ENCODE measurements at regions of chr3 and their contacts with region 1.

Region 1: DNA sequence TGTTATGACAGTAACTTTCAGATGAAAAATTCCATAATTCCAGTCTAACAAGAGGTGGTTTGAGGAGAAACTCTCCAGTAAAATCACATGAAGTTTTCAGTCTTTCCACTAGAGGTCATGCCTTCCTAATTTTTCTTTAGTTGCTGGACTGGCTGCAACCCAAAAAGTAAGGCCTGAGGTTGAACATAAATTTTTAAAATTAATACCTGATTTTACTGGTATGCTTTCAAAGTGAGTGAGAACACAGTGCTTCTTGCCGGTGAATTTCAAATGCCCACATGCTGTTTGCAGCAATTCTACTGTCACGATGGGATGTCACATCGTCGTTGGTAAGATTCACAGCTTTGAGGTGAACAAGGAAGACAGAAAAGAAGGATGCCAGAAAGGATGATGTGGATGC is 89.0 kb upstream of the FGF12 start:
- DNase-seq: peak; percentile 33
- ATAC-seq: no peak
- H3K4me3 ChIP-seq: no peak overlapping the region
- H3K27ac ChIP-seq: no peak overlapping the region
- H3K4me1 ChIP-seq: peaks cover 8 to 22% of the 10 kb centered on the region in 2 experiments; a peak in 3 of 4 replicates
- H3K27me3 ChIP-seq: no peaks in the 10 kb centered on the region
- CTCF ChIP-seq: peak; percentile 58 to 73 (median 70)
- POLR2A ChIP-seq: no peak
- RAD21 ChIP-seq: peak; percentile 91

Region 2: GRCh38 chr3:192802957-192803899 is 13.1 kb before region 1 on chr3:
- CTCF ChIA-PET with region 1: interaction called, 10 read pairs
- POLR2A ChIA-PET with region 1: no interaction called
- RAD21 ChIA-PET with region 1: no interaction called
- intact Hi-C with region 1: no loop called
- DNase-seq: peak; percentile 38
- ATAC-seq: peak; percentile 82
- H3K4me3 ChIP-seq: no peak overlapping the region
- H3K27ac ChIP-seq: no peak overlapping the region
- H3K4me1 ChIP-seq: no peaks in the 10 kb centered on the region
- H3K27me3 ChIP-seq: no peaks in the 10 kb centered on the region
- CTCF ChIP-seq: peak; percentile 52 to 68 (median 56)
- POLR2A ChIP-seq: no peak
- RAD21 ChIP-seq: peak; percentile 54

Region 3: DNA sequence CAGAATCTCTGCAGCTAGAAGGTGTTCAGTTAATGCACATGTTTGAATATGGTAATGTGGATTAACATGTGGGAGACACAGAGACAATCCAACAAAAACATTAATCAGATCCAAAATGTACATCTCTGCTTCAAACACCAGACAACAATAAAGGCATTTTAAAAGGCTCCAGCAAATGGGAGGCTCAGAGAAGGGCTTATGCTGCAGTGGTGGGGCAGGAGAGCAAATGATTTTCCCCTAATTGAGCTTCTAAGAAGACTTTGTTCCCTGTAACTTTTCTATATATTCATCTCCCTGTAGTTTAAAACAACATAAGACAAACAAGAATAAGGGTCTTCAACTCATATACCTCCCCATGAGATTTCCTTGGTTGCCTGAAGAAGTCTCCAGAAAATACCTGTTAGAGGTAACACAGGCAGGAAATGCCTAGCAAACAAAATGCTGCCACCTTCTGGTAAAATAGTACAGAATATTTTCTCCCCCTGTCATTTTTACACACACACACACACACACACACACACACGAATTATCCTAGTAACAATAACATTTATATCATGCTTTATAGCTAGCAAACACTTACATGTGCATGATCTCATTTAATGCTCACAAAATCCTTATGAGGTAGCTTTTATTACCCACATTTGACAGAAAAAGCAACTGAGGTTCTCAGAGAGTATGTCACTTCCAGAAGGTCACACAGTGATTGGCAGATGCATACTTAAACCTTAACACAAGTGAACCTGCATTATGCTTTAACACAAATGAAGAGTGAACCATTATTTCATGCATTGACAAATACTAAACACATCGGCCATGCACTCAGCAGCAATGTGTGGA is 224.7 kb after region 1 on chr3:
- CTCF ChIA-PET with region 1: interaction called, 57 read pairs
- POLR2A ChIA-PET with region 1: interaction called, 3 read pairs
- RAD21 ChIA-PET with region 1: interaction called, 6 to 10 read pairs
- intact Hi-C with region 1: loop called (anchors 1 kb)
- DNase-seq: peak; percentile 50
- ATAC-seq: peak; percentile 83
- H3K4me3 ChIP-seq: no peak overlapping the region
- H3K27ac ChIP-seq: no peak overlapping the region
- H3K4me1 ChIP-seq: no peaks in the 10 kb centered on the region
- H3K27me3 ChIP-seq: no peaks in the 10 kb centered on the region
- CTCF ChIP-seq: peak; percentile 38 to 71 (median 65); a peak in 5 of 6 replicates
- POLR2A ChIP-seq: no peak
- RAD21 ChIP-seq: peak; percentile 85

Region 4: GRCh38 chr3:193229851-193230425 is 413.6 kb after region 1 on chr3:
- CTCF ChIA-PET with region 1: interaction called, 3 read pairs
- POLR2A ChIA-PET with region 1: no interaction called
- RAD21 ChIA-PET with region 1: no interaction called
- intact Hi-C with region 1: loop called (anchors 10 kb)
- DNase-seq: no peak
- ATAC-seq: no peak
- H3K4me3 ChIP-seq: no peak overlapping the region
- H3K27ac ChIP-seq: no peak overlapping the region
- H3K4me1 ChIP-seq: no peaks in the 10 kb centered on the region
- H3K27me3 ChIP-seq: peaks cover 33% of the 10 kb centered on the region; the same call in 1 of the 2 replicates
- CTCF ChIP-seq: no peak
- POLR2A ChIP-seq: no peak
- RAD21 ChIP-seq: no peak

Region 5: GRCh38 chr3:193564012-193564411 is 747.7 kb after region 1 on chr3:
- CTCF ChIA-PET with region 1: interaction called, 16 read pairs
- POLR2A ChIA-PET with region 1: no interaction called
- RAD21 ChIA-PET with region 1: interaction called in 1 of 2 experiments, 3 read pairs
- intact Hi-C with region 1: no loop called
- DNase-seq: peak; percentile 27
- ATAC-seq: peak; percentile 95
- H3K4me3 ChIP-seq: no peak overlapping the region
- H3K27ac ChIP-seq: no peak overlapping the region
- H3K4me1 ChIP-seq: no peaks in the 10 kb centered on the region
- H3K27me3 ChIP-seq: peaks cover 13% of the 10 kb centered on the region; the same call in 1 of the 2 replicates
- CTCF ChIP-seq: peak; percentile 35 to 58 (median 52); a peak in 5 of 6 replicates
- POLR2A ChIP-seq: no peak
- RAD21 ChIP-seq: peak; percentile 49